CD8-positive, alpha-beta T cell (primary cell): ENCODE measurements at regions of chr17 and their contacts with region 1.

Region 1: GRCh38 chr17:46044286-46044928 is 45.4 kb downstream of the STH start:
- DNase-seq: peak; percentile 12 to 76 (median 59)
- ATAC-seq: peak; percentile 56
- H3K4me3 ChIP-seq: no peak overlapping the region
- H3K4me3 Mint-ChIP-seq: no peak overlapping the region
- H3K27ac ChIP-seq: no peak overlapping the region
- H3K27ac Mint-ChIP-seq: peak overlapping the region; percentile 56
- H3K4me1 ChIP-seq: no peaks in the 10 kb centered on the region
- H3K4me1 Mint-ChIP-seq: peaks cover 16% of the 10 kb centered on the region
- H3K27me3 ChIP-seq: no peaks in the 10 kb centered on the region
- H3K27me3 Mint-ChIP-seq: no peaks in the 10 kb centered on the region
- CTCF ChIP-seq: peak; percentile 81

Region 2: GRCh38 chr17:46028981-46029565 is 15.3 kb before region 1 on chr17:
- CTCF ChIA-PET with region 1: interaction called, 28 read pairs
- POLR2A ChIA-PET with region 1: interaction called, 4 read pairs
- intact Hi-C with region 1: no loop called
- DNase-seq: no peak
- ATAC-seq: no peak
- H3K4me3 ChIP-seq: no peak overlapping the region
- H3K4me3 Mint-ChIP-seq: no peak overlapping the region
- H3K27ac ChIP-seq: peak overlapping the region in 1 of 2 experiments; percentile 2
- H3K27ac Mint-ChIP-seq: peak overlapping the region; percentile 62
- H3K4me1 ChIP-seq: no peaks in the 10 kb centered on the region
- H3K4me1 Mint-ChIP-seq: peaks cover 15% of the 10 kb centered on the region
- H3K27me3 ChIP-seq: no peaks in the 10 kb centered on the region
- H3K27me3 Mint-ChIP-seq: no peaks in the 10 kb centered on the region
- CTCF ChIP-seq: no peak

Region 3: DNA sequence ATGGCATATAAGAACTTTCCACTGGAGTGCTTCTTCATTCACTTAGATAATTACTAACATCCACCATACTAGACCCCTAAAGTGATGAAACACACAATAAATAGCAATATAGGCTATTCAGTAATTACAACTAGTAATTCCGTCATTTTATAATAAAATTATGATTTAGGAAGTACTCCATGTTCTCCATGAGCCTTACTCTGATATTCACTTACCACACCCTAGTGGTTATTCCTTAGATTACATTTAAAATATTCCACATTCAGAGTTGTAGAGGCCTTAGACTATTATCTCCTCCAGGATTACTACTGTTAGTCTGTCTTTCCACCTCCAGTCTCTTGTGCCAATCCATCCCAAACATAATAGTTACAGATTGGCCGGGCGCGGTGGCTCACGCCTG is 17.0 kb after region 1 on chr17:
- CTCF ChIA-PET with region 1: interaction called, 11 read pairs
- POLR2A ChIA-PET with region 1: no interaction called
- intact Hi-C with region 1: loop called in 1 of 2 experiments (anchors 1 kb)
- DNase-seq: peak in 1 of 9 experiments; percentile 25
- ATAC-seq: no peak
- H3K4me3 ChIP-seq: no peak overlapping the region
- H3K4me3 Mint-ChIP-seq: no peak overlapping the region
- H3K27ac ChIP-seq: no peak overlapping the region
- H3K27ac Mint-ChIP-seq: no peak overlapping the region
- H3K4me1 ChIP-seq: no peaks in the 10 kb centered on the region
- H3K4me1 Mint-ChIP-seq: peaks cover 25% of the 10 kb centered on the region
- H3K27me3 ChIP-seq: no peaks in the 10 kb centered on the region
- H3K27me3 Mint-ChIP-seq: no peaks in the 10 kb centered on the region
- CTCF ChIP-seq: peak; percentile 51